Activated CD4-positive, alpha-beta T cell treated with anti-CD3 and anti-CD28 coated beads, Interleukin-2, amount 10 ng/mL, durations not matched to agents 7 days and 5 days (primary cell): ENCODE measurements at regions of chr1 and their contacts with region 1.

Region 1: DNA sequence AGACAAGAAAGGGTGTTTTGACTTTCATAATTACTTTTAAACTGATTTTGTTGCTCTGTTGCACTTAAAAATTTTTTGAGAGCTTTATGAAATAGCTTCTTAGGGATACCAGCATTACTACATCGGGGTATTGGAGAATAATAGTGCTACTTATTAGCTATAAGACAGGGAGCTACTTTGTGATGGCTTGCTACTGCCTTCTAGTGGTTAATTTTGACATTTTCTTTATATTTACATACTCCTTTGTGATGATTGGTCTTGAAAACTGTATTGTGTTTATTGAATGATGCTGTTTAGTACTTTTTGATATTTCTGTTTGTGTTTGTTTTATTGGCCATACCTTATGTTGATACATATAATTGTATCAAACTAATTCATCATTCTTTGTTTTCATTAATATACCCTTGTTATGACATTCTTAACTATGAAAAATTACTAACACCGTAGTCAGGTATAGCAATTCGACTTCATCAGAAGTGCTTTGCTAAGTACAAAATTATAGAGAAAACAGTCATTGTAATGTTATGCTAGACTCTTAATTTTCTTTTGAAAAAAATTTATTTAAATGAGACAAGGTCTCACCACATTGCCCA is 85.5 kb downstream of the CLIC4 start:
- DNase-seq: peak; percentile 17
- H3K4me3 Mint-ChIP-seq: no peak overlapping the region
- H3K27ac Mint-ChIP-seq: no peak overlapping the region
- H3K4me1 Mint-ChIP-seq: no peaks in the 10 kb centered on the region
- H3K27me3 Mint-ChIP-seq: no peaks in the 10 kb centered on the region

Region 2: DNA sequence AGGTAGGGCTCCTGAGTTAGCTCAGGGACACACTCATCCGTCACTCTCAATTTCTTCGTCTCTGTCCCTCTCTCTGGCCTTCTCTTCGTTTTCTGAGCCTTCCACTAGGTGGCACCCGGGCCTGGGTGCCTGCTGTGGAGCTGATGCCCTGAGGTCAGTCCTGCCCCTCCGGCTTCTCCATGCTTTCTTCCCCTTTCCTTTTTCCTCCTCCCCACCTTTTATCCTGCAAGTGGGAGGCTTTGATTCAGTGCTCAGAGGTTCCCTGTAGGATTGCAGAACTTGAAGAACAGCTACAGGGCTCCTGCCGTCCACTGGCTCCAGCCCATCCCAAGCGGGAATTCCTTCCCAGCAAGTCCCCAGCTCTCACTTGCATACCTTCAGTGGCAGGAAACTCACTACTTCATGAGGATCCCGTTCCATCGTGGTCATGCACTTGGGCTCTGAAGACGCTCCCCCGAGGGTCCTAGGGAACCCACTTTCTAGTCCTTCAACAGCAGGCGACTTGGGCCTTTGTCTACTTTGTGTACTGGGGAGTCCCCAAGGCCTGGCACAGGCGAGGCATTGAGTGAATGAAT is 142.1 kb before region 1 on chr1:
- CTCF ChIA-PET with region 1: interaction called, 28 read pairs
- POLR2A ChIA-PET with region 1: no interaction called
- DNase-seq: peak; percentile 59
- H3K4me3 Mint-ChIP-seq: no peak overlapping the region
- H3K27ac Mint-ChIP-seq: peak overlapping the region; percentile 5
- H3K4me1 Mint-ChIP-seq: peaks cover 2% of the 10 kb centered on the region
- H3K27me3 Mint-ChIP-seq: no peaks in the 10 kb centered on the region

Region 3: GRCh38 chr1:24847995-24848881 is 17.5 kb after region 1 on chr1:
- CTCF ChIA-PET with region 1: interaction called, 10 read pairs
- POLR2A ChIA-PET with region 1: no interaction called
- DNase-seq: peak; percentile 91
- H3K4me3 Mint-ChIP-seq: peak overlapping the region; percentile 60
- H3K27ac Mint-ChIP-seq: peak overlapping the region; percentile 77
- H3K4me1 Mint-ChIP-seq: peaks cover 30% of the 10 kb centered on the region
- H3K27me3 Mint-ChIP-seq: peaks cover 47% of the 10 kb centered on the region

Region 4: GRCh38 chr1:24861821-24862727 is 31.3 kb after region 1 on chr1:
- CTCF ChIA-PET with region 1: no interaction called
- POLR2A ChIA-PET with region 1: no interaction called
- DNase-seq: no peak
- H3K4me3 Mint-ChIP-seq: no peak overlapping the region
- H3K27ac Mint-ChIP-seq: no peak overlapping the region
- H3K4me1 Mint-ChIP-seq: no peaks in the 10 kb centered on the region
- H3K27me3 Mint-ChIP-seq: peaks cover 18% of the 10 kb centered on the region